Posterior vena cava (tissue), 2 donors: ENCODE measurements at regions of chr9 and their contacts with region 1.

Region 1: GRCh38 chr9:13991395-13991794 is 322.5 kb downstream of the NFIB start:
- DNase-seq: no peak

Region 2: DNA sequence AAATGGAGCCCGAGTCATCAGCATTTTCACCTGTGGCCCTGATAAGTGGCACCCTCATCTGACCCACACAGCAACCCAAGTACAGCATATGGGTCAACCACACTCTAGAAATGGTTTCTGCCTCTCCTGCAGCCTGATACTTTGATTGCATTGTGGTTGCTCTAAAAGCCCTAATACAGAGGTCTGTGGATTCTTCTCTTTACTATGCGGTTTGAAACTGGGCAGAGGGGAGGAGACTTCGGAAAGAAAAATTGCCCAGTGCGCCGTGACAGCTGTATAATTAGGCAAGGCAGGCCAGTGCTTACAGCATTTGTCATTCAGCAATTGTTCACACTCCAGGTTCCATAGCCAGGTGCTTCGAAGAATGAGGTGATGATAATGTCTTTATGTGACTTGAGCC is 38.5 kb before region 1 on chr9:
- intact Hi-C with region 1: loop called in 1 of 2 experiments (anchors 1 kb)
- DNase-seq: no peak

Region 3: GRCh38 chr9:13963005-13963653 is 28.3 kb before region 1 on chr9:
- intact Hi-C with region 1: no loop called
- DNase-seq: no peak

Region 4: GRCh38 chr9:14027116-14027800 is 35.9 kb after region 1 on chr9:
- intact Hi-C with region 1: no loop called
- DNase-seq: peak; percentile 69

Region 5: GRCh38 chr9:14353222-14354056 is 362.0 kb after region 1 on chr9:
- intact Hi-C with region 1: no loop called
- DNase-seq: peak; percentile 97